Esophagus squamous epithelium (tissue), 5 donors: ENCODE measurements at regions of chr4 and their contacts with region 1.

Region 1: DNA sequence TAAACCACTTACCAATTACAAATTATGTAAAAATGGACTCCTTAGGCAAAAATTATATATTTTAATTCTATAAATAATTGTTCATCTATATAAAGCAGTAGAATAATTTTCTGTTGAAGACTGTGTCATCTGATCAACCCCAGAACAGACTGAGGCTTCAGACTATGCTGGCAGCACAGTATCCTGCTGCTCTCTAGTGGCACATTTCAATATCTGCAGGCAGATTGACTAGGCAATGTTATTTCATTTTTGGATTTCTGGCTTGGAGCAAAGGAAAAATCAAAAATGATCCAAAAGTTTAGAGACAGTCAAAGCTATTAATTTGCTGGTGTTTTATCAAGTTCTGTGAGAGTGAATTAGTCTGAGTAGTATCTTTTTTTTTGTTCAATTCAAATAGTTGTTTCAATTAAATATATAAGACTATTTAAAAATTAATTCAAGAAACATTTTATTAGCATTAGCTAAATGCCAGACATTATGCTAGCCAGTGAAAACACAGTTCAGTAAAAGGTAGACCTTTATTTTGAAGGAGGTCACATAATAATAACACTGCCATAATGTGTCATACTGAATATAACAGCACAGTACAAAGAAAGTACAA is 21.3 kb upstream of the SULT1E1 start:
- DNase-seq: no peak
- H3K4me3 ChIP-seq: no peak overlapping the region
- H3K27ac ChIP-seq: no peak overlapping the region
- H3K4me1 ChIP-seq: no peaks in the 10 kb centered on the region
- H3K27me3 ChIP-seq: no peaks in the 10 kb centered on the region
- CTCF ChIP-seq: peak; percentile 60 to 90 (median 78)
- POLR2A ChIP-seq: no peak

Region 2: GRCh38 chr4:69697536-69698242 is 183.6 kb before region 1 on chr4:
- intact Hi-C with region 1: loop called (anchors 10 kb)
- DNase-seq: no peak
- H3K4me3 ChIP-seq: no peak overlapping the region
- H3K27ac ChIP-seq: no peak overlapping the region
- H3K4me1 ChIP-seq: no peaks in the 10 kb centered on the region
- H3K27me3 ChIP-seq: no peaks in the 10 kb centered on the region
- CTCF ChIP-seq: no peak
- POLR2A ChIP-seq: no peak

Region 3: DNA sequence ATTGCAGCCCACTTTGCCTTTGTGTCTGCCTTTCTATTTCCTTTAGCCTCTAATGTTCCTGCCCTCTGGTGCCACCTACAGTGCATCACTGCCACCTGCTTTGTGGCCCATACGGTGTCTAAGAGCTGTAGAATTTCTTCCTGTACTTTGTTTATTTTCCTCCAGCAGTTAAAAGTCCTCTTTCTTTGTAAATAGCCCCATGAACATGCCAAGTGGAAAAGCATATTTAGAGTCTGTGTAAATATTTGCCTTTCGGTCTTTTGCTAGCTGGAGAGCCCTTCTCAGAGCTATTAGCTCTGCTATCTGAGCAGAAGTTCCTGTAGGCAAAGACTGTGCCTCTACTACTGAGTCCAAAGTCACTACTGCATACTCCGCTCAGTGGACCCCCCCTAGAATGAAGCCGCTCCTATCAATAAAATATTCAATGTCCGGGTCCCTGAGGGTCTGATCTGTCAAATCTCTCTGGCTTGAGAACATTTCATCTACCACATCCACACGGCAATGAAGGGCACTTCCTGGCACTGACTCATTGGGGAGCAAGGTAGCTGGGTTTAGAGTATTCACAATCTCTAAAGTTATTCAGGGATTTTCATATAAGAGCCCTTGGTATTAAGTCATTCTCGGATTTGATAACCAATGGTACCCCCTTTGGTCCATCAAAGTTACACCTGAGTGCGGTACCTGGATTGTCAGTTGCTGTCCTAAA is 57.6 kb before region 1 on chr4:
- intact Hi-C with region 1: no loop called
- DNase-seq: no peak
- H3K4me3 ChIP-seq: no peak overlapping the region
- H3K27ac ChIP-seq: no peak overlapping the region
- H3K4me1 ChIP-seq: no peaks in the 10 kb centered on the region
- H3K27me3 ChIP-seq: no peaks in the 10 kb centered on the region
- CTCF ChIP-seq: peak in 4 of 6 experiments; percentile 30 to 68 (median 54)
- POLR2A ChIP-seq: no peak